Aorta (tissue), 5 donors: ENCODE measurements at regions of chr6 and their contacts with region 1.

Region 1: GRCh38 chr6:20056350-20056992 is 155.8 kb downstream of the MBOAT1 start:
- DNase-seq: no peak
- ATAC-seq: no peak
- H3K4me3 ChIP-seq: no peak overlapping the region
- H3K27ac ChIP-seq: no peak overlapping the region
- H3K4me1 ChIP-seq: no peaks in the 10 kb centered on the region
- H3K27me3 ChIP-seq: no peaks in the 10 kb centered on the region

Region 2: DNA sequence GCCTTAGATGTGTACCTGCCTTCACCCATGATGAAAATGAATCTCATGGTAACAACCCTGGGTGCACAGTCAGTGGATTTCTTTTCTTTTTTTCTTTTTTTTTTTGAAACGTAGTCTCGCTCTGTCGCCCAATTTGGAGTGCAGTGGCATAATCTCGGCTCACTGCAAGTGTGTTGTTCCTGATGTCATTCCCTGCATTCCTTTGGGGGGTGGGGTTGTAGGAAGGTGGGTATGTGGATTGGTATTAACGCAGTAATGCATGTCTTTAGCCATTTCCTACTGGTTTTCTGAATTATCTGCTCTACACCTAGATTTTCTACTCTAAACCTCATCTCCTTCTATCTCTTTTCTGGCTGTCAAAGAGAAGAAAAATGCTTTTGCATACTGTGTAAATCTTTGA is 1522.7 kb before region 1 on chr6:
- intact Hi-C with region 1: loop called in 1 of 2 experiments (anchors 5 kb)
- DNase-seq: no peak
- ATAC-seq: no peak
- H3K4me3 ChIP-seq: no peak overlapping the region
- H3K27ac ChIP-seq: no peak overlapping the region
- H3K4me1 ChIP-seq: no peaks in the 10 kb centered on the region
- H3K27me3 ChIP-seq: no peaks in the 10 kb centered on the region

Region 3: GRCh38 chr6:18595774-18596530 is 1460.5 kb before region 1 on chr6:
- intact Hi-C with region 1: loop called (anchors 2 to 5 kb)
- DNase-seq: no peak
- ATAC-seq: peak; percentile 91
- H3K4me3 ChIP-seq: peak overlapping the region in 1 of 2 donors; percentile 11
- H3K27ac ChIP-seq: peak overlapping the region in 1 of 2 donors; percentile 76
- H3K4me1 ChIP-seq: no peaks in the 10 kb centered on the region
- H3K27me3 ChIP-seq: no peaks in the 10 kb centered on the region

Region 4: GRCh38 chr6:18748314-18748713 is 1308.2 kb before region 1 on chr6:
- intact Hi-C with region 1: loop called in 1 of 2 experiments (anchors 5 kb)
- DNase-seq: no peak
- ATAC-seq: no peak
- H3K4me3 ChIP-seq: no peak overlapping the region
- H3K27ac ChIP-seq: no peak overlapping the region
- H3K4me1 ChIP-seq: no peaks in the 10 kb centered on the region
- H3K27me3 ChIP-seq: no peaks in the 10 kb centered on the region

Region 5: GRCh38 chr6:18990059-18990978 is 1066.2 kb before region 1 on chr6:
- intact Hi-C with region 1: loop called in 1 of 2 experiments (anchors 10 kb)
- DNase-seq: peak; percentile 62 to 88
- ATAC-seq: peak; percentile 41
- H3K4me3 ChIP-seq: no peak overlapping the region
- H3K27ac ChIP-seq: no peak overlapping the region
- H3K4me1 ChIP-seq: no peaks in the 10 kb centered on the region
- H3K27me3 ChIP-seq: no peaks in the 10 kb centered on the region

Region 6: GRCh38 chr6:19731286-19731685 is 325.2 kb before region 1 on chr6:
- intact Hi-C with region 1: no loop called
- DNase-seq: no peak
- ATAC-seq: no peak
- H3K4me3 ChIP-seq: no peak overlapping the region
- H3K27ac ChIP-seq: no peak overlapping the region
- H3K4me1 ChIP-seq: peaks cover 0 to 4% of the 10 kb centered on the region in 2 donors
- H3K27me3 ChIP-seq: no peaks in the 10 kb centered on the region

Region 7: DNA sequence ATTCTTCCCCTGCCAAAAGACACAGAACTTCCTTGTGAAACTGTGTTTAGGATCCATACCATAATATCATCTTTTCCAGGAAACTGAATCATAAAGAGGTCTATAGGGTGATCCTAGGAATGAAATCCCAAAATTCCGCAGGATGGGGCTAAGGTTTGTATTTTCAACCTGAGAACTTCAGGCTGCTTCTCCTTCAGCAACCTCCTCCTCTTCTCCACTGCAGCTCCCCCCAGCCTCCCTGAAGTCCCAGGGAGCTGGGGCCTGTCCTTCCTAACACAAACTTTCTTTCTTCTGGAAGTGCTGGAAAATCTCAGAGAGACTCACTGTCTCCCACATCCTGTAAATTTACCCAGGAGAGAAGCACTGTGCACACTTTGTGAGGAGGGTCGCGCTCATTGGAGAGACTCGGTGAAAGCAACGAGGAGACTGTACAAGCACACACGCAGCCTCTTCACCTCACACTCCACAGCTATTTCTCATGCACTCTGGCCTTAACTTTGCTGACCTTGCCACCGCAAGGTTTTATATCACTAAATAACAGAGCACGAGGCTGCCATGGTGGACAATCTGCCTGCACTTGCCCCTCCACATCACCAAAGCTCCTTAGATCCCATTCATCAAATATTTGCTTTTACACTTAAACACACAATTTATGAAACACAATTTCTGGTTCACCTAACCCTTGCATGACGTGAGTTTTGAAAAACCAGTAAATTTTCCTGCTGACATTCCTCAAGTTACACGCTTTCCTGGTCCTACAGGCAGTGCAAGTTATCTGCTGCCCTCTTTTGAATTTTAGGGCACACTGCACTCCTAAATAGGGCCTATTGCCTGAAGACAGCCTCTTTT is 205.0 kb before region 1 on chr6:
- intact Hi-C with region 1: loop called in 1 of 2 experiments (anchors 10 kb)
- DNase-seq: no peak
- ATAC-seq: peak; percentile 89
- H3K4me3 ChIP-seq: peak overlapping the region in 1 of 2 donors; percentile 52
- H3K27ac ChIP-seq: peak overlapping the region; percentile 61 to 100
- H3K4me1 ChIP-seq: peaks cover 3 to 9% of the 10 kb centered on the region in 2 donors
- H3K27me3 ChIP-seq: no peaks in the 10 kb centered on the region

Region 8: GRCh38 chr6:20096506-20096905 is 40.0 kb after region 1 on chr6:
- intact Hi-C with region 1: no loop called
- DNase-seq: no peak
- ATAC-seq: no peak
- H3K4me3 ChIP-seq: no peak overlapping the region
- H3K27ac ChIP-seq: no peak overlapping the region
- H3K4me1 ChIP-seq: peaks cover 0 to 8% of the 10 kb centered on the region in 2 donors
- H3K27me3 ChIP-seq: no peaks in the 10 kb centered on the region

Region 9: GRCh38 chr6:20404641-20405032 is 348.2 kb after region 1 on chr6:
- intact Hi-C with region 1: no loop called
- DNase-seq: no peak
- ATAC-seq: no peak
- H3K4me3 ChIP-seq: peak overlapping the region; percentile 92 to 94
- H3K27ac ChIP-seq: peak overlapping the region in 1 of 2 donors; percentile 62
- H3K4me1 ChIP-seq: peaks cover 0 to 4% of the 10 kb centered on the region in 2 donors
- H3K27me3 ChIP-seq: no peaks in the 10 kb centered on the region